ENCODE measurements at regions of chr6 and their contacts with region 1.

Region 1: DNA sequence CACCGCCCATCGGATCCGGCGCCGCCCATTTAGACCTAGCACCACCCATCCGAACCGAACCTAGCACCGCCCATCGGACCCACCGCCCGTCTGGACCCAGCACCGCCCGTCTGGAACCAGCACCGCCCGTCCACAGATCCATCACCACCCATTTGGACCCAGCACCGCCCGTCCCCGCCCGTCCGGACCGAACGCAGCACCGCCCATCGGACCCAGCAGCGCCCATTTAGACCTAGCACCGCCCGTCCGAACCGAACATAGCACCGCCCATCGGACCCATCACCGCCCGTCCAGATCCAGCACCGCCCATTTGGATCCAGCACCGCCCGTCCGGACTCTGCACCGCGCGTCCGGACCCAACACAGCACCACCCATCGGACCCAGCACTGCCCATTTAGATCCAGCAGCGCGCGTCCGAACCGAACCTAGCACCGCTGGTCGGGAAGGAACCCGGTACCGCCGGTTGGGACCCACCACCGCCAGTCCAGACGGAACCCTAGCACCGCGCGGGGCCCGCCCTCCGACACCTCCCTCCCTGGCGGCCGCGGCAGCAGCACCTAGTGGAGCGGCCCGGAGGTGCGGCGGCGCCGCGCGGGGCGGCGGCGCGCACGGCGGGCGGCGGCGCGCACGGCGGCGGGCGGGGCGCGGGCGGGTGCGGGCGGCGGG is 348 bp upstream of the AFDN start:
- DNase-seq: peak; percentile 59 to 71 (median 67)
- H3K4me3 ChIP-seq: peak overlapping the region; percentile 52 to 73
- H3K4me3 Mint-ChIP-seq: peak overlapping the region; percentile 84 to 92 (median 89)
- H3K27ac ChIP-seq: peak overlapping the region; percentile 21
- H3K27ac Mint-ChIP-seq: peak overlapping the region; percentile 64 to 92 (median 73)
- H3K4me1 ChIP-seq: peaks cover 20% of the 10 kb centered on the region
- H3K4me1 Mint-ChIP-seq: peaks cover 13 to 37% (median 20%) of the 10 kb centered on the region in 4 donors
- H3K27me3 ChIP-seq: no peaks in the 10 kb centered on the region
- H3K27me3 Mint-ChIP-seq: peaks cover 10 to 20% of the 10 kb centered on the region in 2 donors

Region 2: DNA sequence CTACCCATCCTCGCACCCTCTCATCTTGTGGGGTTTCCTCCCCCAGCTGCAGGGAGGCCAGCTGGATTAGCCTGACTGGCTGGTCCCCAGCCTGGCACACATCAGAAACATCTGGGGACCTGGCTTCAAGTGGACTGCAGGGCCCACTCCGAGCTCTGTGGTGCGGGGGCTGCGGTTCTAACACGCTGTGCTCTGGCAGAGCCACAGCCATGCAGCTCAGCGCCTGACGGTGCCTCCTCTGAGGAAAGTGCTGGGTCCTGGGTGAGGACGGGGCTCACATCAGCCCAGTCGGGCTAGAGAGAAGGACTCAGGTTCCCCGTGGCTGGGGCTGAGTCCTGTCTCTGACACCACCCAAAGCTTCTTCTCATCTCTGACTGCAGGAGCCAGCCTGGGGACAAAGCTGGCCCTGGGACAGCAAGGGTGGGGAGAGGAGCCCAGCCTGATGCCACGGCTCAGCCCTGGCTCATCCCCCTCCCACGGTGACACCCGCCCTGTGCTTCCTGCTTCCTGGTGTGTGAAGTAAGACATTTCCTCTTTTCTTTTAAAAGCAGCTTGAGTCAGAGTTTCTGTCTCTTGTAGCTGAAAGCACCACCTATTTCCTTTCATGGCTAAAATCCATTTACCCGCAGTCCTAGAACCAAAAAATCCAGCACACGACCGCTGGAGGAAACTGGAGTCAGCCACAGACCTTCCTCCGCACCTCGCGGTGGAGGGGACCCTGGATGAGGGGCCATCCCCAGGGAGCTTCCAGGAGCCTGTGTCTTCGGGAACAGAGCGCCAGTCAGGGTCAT is 127.0 kb before region 1 on chr6:
- CTCF ChIA-PET with region 1: interaction called, 3 read pairs
- POLR2A ChIA-PET with region 1: no interaction called
- intact Hi-C with region 1: loop called (anchors 10 kb)
- DNase-seq: peak in 4 of 5 donors; percentile 6 to 32 (median 25)
- H3K4me3 ChIP-seq: peak overlapping the region in 1 of 2 donors; percentile 3
- H3K4me3 Mint-ChIP-seq: peak overlapping the region; percentile 63 to 86 (median 78)
- H3K27ac ChIP-seq: no peak overlapping the region
- H3K27ac Mint-ChIP-seq: peak overlapping the region in 6 of 7 donors; percentile 2 to 88 (median 66)
- H3K4me1 ChIP-seq: peaks cover 16% of the 10 kb centered on the region
- H3K4me1 Mint-ChIP-seq: peaks cover 6 to 17% (median 15%) of the 10 kb centered on the region in 4 donors
- H3K27me3 ChIP-seq: peaks cover 3% of the 10 kb centered on the region
- H3K27me3 Mint-ChIP-seq: peaks cover 13 to 14% of the 10 kb centered on the region in 2 donors

Region 3: DNA sequence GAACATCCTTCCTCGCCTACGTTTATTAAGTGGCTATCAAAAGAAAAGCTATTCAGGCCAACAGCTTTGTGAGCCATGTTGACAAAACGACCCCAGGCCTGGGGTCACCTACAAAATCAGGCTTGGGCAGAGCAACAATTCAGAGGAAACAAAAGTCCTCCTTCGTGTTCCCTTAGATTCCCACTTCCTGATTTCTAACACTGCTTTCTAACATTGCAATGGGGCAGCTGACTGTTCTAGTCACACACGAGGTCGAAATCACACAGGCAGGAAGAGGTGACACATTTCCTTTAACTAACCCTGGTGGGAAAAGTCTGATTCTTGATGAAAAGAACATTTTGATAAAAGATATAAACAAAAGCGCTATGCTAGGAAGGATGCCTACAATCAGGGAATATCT is 1843.5 kb after region 1 on chr6:
- CTCF ChIA-PET with region 1: no interaction called
- POLR2A ChIA-PET with region 1: no interaction called
- intact Hi-C with region 1: no loop called
- DNase-seq: no peak
- H3K4me3 ChIP-seq: no peak overlapping the region
- H3K4me3 Mint-ChIP-seq: no peak overlapping the region
- H3K27ac ChIP-seq: no peak overlapping the region
- H3K27ac Mint-ChIP-seq: peak overlapping the region in 3 of 7 donors; percentile 14 to 49 (median 34)
- H3K4me1 ChIP-seq: no peaks in the 10 kb centered on the region
- H3K4me1 Mint-ChIP-seq: peaks cover 0 to 7% (median 3%) of the 10 kb centered on the region in 4 donors
- H3K27me3 ChIP-seq: no peaks in the 10 kb centered on the region
- H3K27me3 Mint-ChIP-seq: no peaks in the 10 kb centered on the region

Measured in CD4-positive, alpha-beta memory T cell (primary cell).